ENCODE measurements at regions of chr1 and their contacts with region 1.

Region 1: DNA sequence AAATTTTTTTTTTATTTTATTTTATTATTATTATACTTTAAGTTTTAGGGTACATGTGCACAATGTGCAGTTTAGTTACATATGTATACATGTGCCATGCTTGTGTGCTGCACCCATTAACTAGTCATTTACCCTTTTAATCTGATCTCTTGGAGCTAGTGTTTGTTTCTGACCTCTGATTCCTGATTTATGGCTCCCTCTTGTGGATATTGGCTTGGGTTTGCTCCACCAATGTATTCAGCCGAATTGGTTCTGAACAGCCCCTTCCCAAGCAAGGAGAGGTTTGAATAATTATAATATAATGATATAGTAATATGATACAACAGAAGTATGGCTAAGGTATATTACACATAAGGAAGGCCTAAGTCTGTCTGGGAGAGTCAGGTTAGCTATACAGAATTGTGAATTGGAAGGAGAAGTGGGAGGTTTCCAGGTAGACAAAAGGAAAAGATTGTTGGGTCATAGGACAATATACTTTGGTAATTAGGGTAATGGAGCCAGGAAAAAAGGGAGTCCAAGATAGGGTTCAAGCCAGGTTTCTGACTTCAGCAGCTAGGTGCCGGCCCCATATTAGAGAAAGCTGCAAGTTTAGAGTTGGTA is 53.1 kb upstream of the HMCN1 start:
- DNase-seq: peak; percentile 64
- H3K4me3 ChIP-seq: no peak overlapping the region
- H3K27ac ChIP-seq: no peak overlapping the region
- H3K4me1 ChIP-seq: peaks cover 8% of the 10 kb centered on the region
- H3K27me3 ChIP-seq: no peaks in the 10 kb centered on the region
- CTCF ChIP-seq: peak; percentile 48 to 50
- POLR2A ChIP-seq: no peak

Region 2: GRCh38 chr1:184982002-184982954 is 698.9 kb before region 1 on chr1:
- CTCF ChIA-PET with region 1: interaction called, 15 read pairs
- POLR2A ChIA-PET with region 1: no interaction called
- dilution Hi-C with region 1: no loop called
- intact Hi-C with region 1: no loop called
- DNase-seq: peak; percentile 64
- H3K4me3 ChIP-seq: no peak overlapping the region
- H3K27ac ChIP-seq: no peak overlapping the region
- H3K4me1 ChIP-seq: no peaks in the 10 kb centered on the region
- H3K27me3 ChIP-seq: peaks cover 6 to 12% of the 10 kb centered on the region in 2 experiments
- CTCF ChIP-seq: peak; percentile 81 to 88
- POLR2A ChIP-seq: no peak

Region 3: DNA sequence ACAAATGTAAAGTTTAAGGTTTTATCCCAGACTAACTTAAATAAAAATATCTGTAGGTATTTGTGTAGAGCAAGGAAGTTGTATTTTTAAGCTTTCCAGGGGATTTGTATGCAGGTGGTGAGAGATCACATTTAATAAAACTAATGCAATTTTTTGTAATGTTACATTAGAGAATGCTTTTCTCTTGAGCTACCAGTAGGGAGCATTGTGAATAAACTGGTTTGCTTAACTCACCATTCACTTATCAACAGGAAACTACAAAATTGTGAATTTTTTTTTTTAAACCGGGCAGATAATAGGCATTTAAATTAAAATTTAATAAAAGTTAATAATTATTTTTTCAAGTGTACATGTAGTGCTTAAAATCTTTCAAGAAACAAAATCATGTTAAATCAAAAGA is 442.7 kb before region 1 on chr1:
- CTCF ChIA-PET with region 1: interaction called, 63 read pairs
- POLR2A ChIA-PET with region 1: no interaction called
- dilution Hi-C with region 1: no loop called
- intact Hi-C with region 1: no loop called
- DNase-seq: no peak
- H3K4me3 ChIP-seq: no peak overlapping the region
- H3K27ac ChIP-seq: no peak overlapping the region
- H3K4me1 ChIP-seq: no peaks in the 10 kb centered on the region
- H3K27me3 ChIP-seq: no peaks in the 10 kb centered on the region
- CTCF ChIP-seq: peak in 1 of 2 donors; percentile 27
- POLR2A ChIP-seq: no peak

Region 4: DNA sequence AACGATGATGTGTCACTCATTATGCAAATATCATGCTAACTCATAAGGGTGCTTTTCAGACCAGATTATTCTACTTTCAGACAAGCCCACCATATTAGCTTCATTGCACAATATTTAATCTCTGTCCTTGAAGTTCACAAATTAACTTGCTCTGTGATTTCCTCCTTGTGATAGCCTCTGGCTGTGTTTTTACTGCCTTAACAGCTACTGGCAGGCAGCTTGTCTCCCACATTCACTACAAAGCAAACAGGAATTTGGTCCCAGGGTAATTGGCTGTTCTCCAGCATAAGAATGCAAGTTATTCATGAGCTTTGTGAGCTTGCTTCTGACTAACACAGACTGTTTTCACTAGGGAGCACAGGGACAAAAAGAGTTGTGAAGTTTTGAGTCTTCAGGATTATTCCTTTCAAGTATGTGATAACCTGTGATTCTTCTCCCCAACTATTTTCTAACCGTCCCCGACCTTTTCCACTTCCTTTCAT is 34.9 kb before region 1 on chr1:
- CTCF ChIA-PET with region 1: interaction called, 15 read pairs
- POLR2A ChIA-PET with region 1: no interaction called
- dilution Hi-C with region 1: no loop called
- intact Hi-C with region 1: no loop called
- DNase-seq: peak; percentile 99
- H3K4me3 ChIP-seq: peak overlapping the region in 1 of 3 experiments; percentile 27
- H3K27ac ChIP-seq: peak overlapping the region; percentile 72
- H3K4me1 ChIP-seq: peaks cover 23% of the 10 kb centered on the region
- H3K27me3 ChIP-seq: no peaks in the 10 kb centered on the region
- CTCF ChIP-seq: no peak
- POLR2A ChIP-seq: no peak

Region 5: DNA sequence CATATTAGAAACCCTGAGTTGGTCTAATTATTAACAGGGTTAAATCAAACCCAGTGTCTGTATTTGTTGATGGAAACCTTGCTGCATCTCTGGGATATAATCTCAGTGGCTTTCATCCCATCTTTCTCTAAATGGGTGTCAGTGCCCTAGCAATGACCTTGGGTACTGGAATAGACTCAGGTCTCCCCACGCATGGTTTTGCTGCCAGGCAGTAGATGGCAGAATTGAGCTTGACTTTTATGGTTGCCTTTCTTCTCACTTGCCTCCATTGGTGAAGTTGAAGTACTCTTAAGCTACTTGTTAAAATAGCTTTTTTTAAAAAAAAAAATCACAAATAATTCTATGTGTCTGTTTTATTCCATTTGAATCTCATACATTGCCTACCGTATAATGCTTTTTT is 28.8 kb before region 1 on chr1:
- CTCF ChIA-PET with region 1: interaction called, 17 read pairs
- POLR2A ChIA-PET with region 1: no interaction called
- dilution Hi-C with region 1: no loop called
- intact Hi-C with region 1: loop called (anchors 1 kb)
- DNase-seq: no peak
- H3K4me3 ChIP-seq: no peak overlapping the region
- H3K27ac ChIP-seq: no peak overlapping the region
- H3K4me1 ChIP-seq: peaks cover 2% of the 10 kb centered on the region
- H3K27me3 ChIP-seq: no peaks in the 10 kb centered on the region
- CTCF ChIP-seq: peak; percentile 12 to 17
- POLR2A ChIP-seq: no peak

Region 6: GRCh38 chr1:185670187-185670627 is 10.9 kb before region 1 on chr1:
- CTCF ChIA-PET with region 1: interaction called, 25 read pairs
- POLR2A ChIA-PET with region 1: no interaction called
- dilution Hi-C with region 1: no loop called
- intact Hi-C with region 1: no loop called
- DNase-seq: peak; percentile 74
- H3K4me3 ChIP-seq: no peak overlapping the region
- H3K27ac ChIP-seq: no peak overlapping the region
- H3K4me1 ChIP-seq: peaks cover 17% of the 10 kb centered on the region
- H3K27me3 ChIP-seq: no peaks in the 10 kb centered on the region
- CTCF ChIP-seq: peak; percentile 44 to 57
- POLR2A ChIP-seq: no peak

Region 7: DNA sequence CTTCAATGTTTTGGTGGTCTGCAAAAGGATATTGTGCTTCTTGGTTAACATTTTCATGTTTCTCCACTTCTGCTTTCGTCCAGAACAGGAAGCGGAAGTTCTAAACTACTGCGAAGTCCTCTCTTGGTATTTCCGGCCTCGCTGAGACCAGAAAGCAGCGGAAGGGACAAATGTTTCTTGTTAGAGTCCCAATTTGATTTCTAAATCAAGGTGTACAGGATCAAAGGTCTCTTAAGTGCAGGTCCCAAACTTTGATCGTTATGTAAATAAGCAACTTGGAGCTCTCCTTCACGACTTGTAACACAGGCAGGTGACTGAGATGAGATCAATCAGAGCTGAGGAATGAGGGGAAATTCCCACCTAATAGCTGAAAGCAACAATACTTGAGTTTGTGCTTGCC is 12.9 kb after region 1 on chr1:
- CTCF ChIA-PET with region 1: interaction called, 14 read pairs
- POLR2A ChIA-PET with region 1: no interaction called
- dilution Hi-C with region 1: no loop called
- intact Hi-C with region 1: no loop called
- DNase-seq: peak; percentile 57
- H3K4me3 ChIP-seq: peak overlapping the region in 1 of 3 experiments; percentile 32
- H3K27ac ChIP-seq: peak overlapping the region; percentile 65
- H3K4me1 ChIP-seq: peaks cover 12% of the 10 kb centered on the region
- H3K27me3 ChIP-seq: no peaks in the 10 kb centered on the region
- CTCF ChIP-seq: no peak
- POLR2A ChIP-seq: no peak

Region 8: GRCh38 chr1:185896863-185897262 is 215.7 kb after region 1 on chr1:
- CTCF ChIA-PET with region 1: no interaction called
- POLR2A ChIA-PET with region 1: no interaction called
- dilution Hi-C with region 1: no loop called
- intact Hi-C with region 1: no loop called
- DNase-seq: no peak
- H3K4me3 ChIP-seq: no peak overlapping the region
- H3K27ac ChIP-seq: no peak overlapping the region
- H3K4me1 ChIP-seq: peaks cover 10% of the 10 kb centered on the region
- H3K27me3 ChIP-seq: no peaks in the 10 kb centered on the region
- CTCF ChIP-seq: no peak
- POLR2A ChIP-seq: no peak

Measured in endothelial cell of umbilical vein (primary cell).